ENCODE measurements at regions of chr17 and their contacts with region 1.

Region 1: DNA sequence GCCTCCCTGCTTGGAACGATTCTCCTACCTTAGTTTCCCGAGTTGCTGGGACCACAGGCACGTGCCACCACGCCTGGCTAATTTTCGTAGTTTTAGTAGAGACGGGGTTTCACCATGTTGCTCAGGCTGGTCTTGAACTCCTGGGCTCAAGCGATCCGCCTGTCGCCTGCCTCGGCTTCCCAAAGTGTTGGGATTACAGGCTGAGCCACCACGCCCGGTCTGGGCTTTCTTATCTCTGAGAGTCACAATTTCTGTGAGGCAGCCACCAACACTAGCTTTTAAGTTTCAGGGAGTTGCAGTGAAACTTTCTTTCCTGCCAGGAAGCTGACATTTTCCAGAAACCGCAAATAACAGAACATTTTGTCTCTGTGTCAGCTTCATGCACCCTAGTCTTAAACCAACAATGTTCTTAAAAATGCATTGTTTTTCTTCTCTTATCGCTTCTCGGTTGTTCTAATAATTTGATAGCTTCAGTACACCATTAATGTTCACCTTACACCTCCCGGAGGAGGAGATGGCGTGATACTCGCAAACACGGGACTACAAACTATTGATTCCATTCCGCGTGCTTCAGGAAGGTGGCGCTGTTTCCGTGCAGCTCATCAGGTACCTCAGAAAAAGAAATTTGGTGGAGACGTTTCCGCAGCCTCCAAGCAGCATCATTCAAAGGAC is 7.4 kb upstream of the DHRS7B start:
- DNase-seq: peak; percentile 79
- ATAC-seq: peak; percentile 88
- H3K4me3 Mint-ChIP-seq: no peak overlapping the region
- H3K27ac Mint-ChIP-seq: no peak overlapping the region
- H3K4me1 Mint-ChIP-seq: peaks cover 7% of the 10 kb centered on the region
- H3K27me3 Mint-ChIP-seq: peaks cover 1% of the 10 kb centered on the region
- CTCF ChIP-seq: peak; percentile 83

Region 2: DNA sequence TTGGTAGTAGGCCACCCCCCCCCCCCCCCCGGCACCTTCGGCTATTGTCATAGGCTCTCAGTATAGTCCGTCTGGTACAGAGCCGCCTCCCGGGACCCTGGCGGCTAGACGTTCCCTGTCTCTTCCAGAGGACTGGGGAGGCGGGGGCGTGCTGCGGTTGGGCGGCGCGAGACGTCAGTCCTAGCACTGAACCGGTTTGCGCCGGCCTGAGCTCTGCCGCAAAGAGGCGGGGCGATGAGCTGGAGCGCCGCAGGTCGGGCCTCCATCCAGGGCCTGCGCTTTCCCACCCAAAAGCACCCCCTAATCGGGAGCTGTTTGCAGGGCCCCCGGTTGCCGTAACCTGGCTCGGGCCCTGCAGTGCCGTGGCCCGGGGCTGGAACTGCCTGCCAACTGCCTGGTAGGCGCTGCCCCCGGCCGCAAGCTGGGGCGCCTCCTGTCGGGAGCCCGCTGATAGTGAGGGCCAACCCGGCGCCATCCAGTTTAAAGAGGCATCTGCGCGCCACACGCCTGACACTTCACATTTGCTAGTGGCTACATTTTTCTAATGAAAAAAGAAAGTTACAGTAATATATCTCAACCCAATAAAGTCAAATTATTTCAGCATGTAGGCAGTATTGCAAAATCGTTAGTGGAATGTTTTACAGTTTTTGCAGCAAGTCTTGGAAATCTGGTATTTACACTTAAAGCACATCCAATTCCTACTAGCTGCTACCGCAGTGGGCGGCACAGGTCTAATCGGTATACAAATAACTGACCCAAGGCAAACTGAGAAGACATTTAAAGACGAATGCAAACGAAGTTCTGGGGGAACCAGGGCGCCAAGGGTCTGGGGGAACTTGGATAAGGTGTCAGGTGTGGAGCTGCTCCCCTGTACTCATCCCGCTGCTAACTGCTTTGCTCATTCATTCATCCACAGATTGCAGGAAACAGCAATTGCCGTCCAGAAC is 75.8 kb before region 1 on chr17:
- CTCF ChIA-PET with region 1: interaction called, 22 read pairs
- POLR2A ChIA-PET with region 1: no interaction called
- intact Hi-C with region 1: no loop called
- DNase-seq: peak; percentile 99
- ATAC-seq: peak; percentile 81
- H3K4me3 Mint-ChIP-seq: peak overlapping the region; percentile 78
- H3K27ac Mint-ChIP-seq: peak overlapping the region; percentile 93
- H3K4me1 Mint-ChIP-seq: peaks cover 21% of the 10 kb centered on the region
- H3K27me3 Mint-ChIP-seq: no peaks in the 10 kb centered on the region
- CTCF ChIP-seq: peak; percentile 84

Region 3: GRCh38 chr17:21085707-21086106 is 33.7 kb before region 1 on chr17:
- CTCF ChIA-PET with region 1: no interaction called
- POLR2A ChIA-PET with region 1: no interaction called
- intact Hi-C with region 1: no loop called
- DNase-seq: no peak
- ATAC-seq: no peak
- H3K4me3 Mint-ChIP-seq: no peak overlapping the region
- H3K27ac Mint-ChIP-seq: no peak overlapping the region
- H3K4me1 Mint-ChIP-seq: no peaks in the 10 kb centered on the region
- H3K27me3 Mint-ChIP-seq: peaks cover 7% of the 10 kb centered on the region
- CTCF ChIP-seq: no peak

Region 4: GRCh38 chr17:21098934-21099689 is 20.3 kb before region 1 on chr17:
- CTCF ChIA-PET with region 1: interaction called, 22 read pairs
- POLR2A ChIA-PET with region 1: no interaction called
- intact Hi-C with region 1: no loop called
- DNase-seq: peak; percentile 90
- ATAC-seq: peak; percentile 97
- H3K4me3 Mint-ChIP-seq: peak overlapping the region; percentile 92
- H3K27ac Mint-ChIP-seq: peak overlapping the region; percentile 99
- H3K4me1 Mint-ChIP-seq: peaks cover 6% of the 10 kb centered on the region
- H3K27me3 Mint-ChIP-seq: no peaks in the 10 kb centered on the region
- CTCF ChIP-seq: no peak

Region 5: DNA sequence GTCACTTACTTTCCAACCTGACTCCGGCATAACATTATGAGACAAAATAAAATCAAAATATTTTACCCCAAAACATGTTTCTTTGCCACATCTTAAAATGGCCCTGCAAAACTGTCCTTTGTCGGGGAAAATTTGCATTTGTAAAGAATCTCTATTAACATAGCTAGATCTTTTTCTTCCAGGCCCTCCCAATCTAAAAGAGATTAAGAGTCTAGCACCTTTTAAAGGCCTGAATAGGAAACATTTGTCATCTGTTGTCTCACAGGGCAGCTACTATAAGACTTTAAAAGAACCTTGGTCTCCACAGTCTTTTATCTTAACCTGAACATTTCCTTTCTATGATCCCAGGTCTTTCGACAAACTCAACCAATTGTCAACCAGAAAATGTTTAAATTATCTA is 10.7 kb before region 1 on chr17:
- CTCF ChIA-PET with region 1: interaction called, 31 read pairs
- POLR2A ChIA-PET with region 1: no interaction called
- intact Hi-C with region 1: no loop called
- DNase-seq: no peak
- ATAC-seq: no peak
- H3K4me3 Mint-ChIP-seq: no peak overlapping the region
- H3K27ac Mint-ChIP-seq: no peak overlapping the region
- H3K4me1 Mint-ChIP-seq: no peaks in the 10 kb centered on the region
- H3K27me3 Mint-ChIP-seq: no peaks in the 10 kb centered on the region
- CTCF ChIP-seq: no peak

Region 6: GRCh38 chr17:21214015-21214776 is 94.8 kb after region 1 on chr17 and contains the start of gene TMEM11:
- CTCF ChIA-PET with region 1: interaction called, 25 read pairs
- POLR2A ChIA-PET with region 1: no interaction called
- intact Hi-C with region 1: no loop called
- DNase-seq: peak; percentile 96
- ATAC-seq: peak; percentile 95
- H3K4me3 Mint-ChIP-seq: peak within 1 kb of the TSS; percentile 95
- H3K27ac Mint-ChIP-seq: peak within 1 kb of the TSS; percentile 94
- H3K4me1 Mint-ChIP-seq: peaks cover 68% of the 10 kb centered on the region
- H3K27me3 Mint-ChIP-seq: no peaks in the 10 kb centered on the region
- CTCF ChIP-seq: no peak
- total RNA-seq, gene TMEM11: 26.2 to 28.9 TPM

Region 7: GRCh38 chr17:21275579-21276263 is 156.3 kb after region 1 on chr17:
- CTCF ChIA-PET with region 1: interaction called, 13 read pairs
- POLR2A ChIA-PET with region 1: no interaction called
- intact Hi-C with region 1: loop called (anchors 10 kb)
- DNase-seq: peak; percentile 96
- ATAC-seq: peak; percentile 85
- H3K4me3 Mint-ChIP-seq: peak overlapping the region; percentile 82
- H3K27ac Mint-ChIP-seq: peak overlapping the region; percentile 87
- H3K4me1 Mint-ChIP-seq: peaks cover 38% of the 10 kb centered on the region
- H3K27me3 Mint-ChIP-seq: no peaks in the 10 kb centered on the region
- CTCF ChIP-seq: peak; percentile 6